HepG2 (cell line): ENCODE measurements at regions of chr2 and their contacts with region 1.

Region 1: GRCh38 chr2:133262888-133263287 is 305.4 kb downstream of the NCKAP5 start:
- DNase-seq: no peak
- ATAC-seq: no peak
- H3K4me3 ChIP-seq: no peak overlapping the region
- H3K27ac ChIP-seq: no peak overlapping the region
- H3K4me1 ChIP-seq: no peaks in the 10 kb centered on the region
- H3K27me3 ChIP-seq: 0 out of 5 replicates have a peak, but pooled peaks cover 0 to 3% of the 10 kb centered on the region in 2 experiments
- CTCF ChIP-seq: no peak
- EP300 ChIP-seq: no peak
- POLR2A ChIP-seq: no peak
- RAD21 ChIP-seq: no peak

Region 2: DNA sequence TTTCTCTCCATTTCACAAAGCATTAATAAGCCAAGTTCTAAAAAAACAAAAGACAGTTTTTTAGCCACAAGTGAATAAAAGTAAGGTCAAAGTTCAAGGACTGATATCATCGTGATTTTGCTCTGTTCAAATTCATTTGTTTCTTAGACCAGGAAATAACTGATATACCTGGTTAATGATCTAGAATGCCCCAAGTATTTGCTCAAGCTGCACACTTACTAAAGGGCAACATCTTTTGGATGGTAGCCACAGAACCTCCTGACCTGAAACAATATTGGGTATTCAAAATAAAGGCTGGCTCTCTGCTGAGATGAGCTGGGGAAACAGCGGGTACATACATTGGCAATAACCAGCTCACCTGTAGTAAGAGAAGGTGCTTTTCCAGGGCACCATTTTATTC is 278.2 kb before region 1 on chr2:
- CTCF ChIA-PET with region 1: no interaction called
- POLR2A ChIA-PET with region 1: no interaction called
- in situ Hi-C with region 1: no loop called
- intact Hi-C with region 1: no loop called
- DNase-seq: no peak
- ATAC-seq: no peak
- H3K4me3 ChIP-seq: no peak overlapping the region
- H3K27ac ChIP-seq: no peak overlapping the region
- H3K4me1 ChIP-seq: no peaks in the 10 kb centered on the region
- H3K27me3 ChIP-seq: no peaks in the 10 kb centered on the region
- CTCF ChIP-seq: no peak
- EP300 ChIP-seq: no peak
- POLR2A ChIP-seq: no peak
- RAD21 ChIP-seq: no peak

Region 3: DNA sequence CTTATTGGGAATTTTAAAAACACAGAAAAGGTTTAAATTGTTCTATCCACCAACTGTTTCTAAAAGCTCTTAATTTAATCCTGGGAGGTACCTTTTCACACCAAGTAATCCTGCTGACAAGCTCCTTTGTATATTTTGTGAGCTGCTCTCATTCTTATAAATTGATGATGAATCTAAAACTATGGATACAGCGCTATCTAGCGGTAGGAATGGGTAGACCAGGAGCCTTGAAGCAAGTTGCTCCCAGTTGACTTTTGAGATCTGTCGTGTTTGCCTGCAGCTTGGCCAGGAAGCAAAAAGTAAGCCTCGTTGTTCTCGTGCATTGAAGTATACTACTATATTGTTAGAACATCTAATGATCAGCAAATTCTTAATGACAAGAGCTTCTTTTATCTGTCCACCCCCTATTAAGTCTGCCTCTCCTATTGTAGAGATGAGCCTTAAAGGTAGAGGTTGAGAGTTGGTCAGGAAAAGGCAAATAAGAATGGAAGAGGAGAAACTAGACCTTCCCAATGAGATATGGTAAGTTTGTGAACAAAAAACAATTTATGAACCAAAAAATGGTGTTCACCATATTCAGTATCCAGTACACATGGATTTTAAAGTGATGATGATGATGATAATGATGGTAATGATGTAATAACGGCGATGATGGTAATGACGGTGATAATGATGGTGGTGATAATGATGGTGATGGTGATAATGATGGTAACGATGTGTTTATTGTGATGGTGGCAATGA is 517.4 kb after region 1 on chr2:
- CTCF ChIA-PET with region 1: no interaction called
- POLR2A ChIA-PET with region 1: no interaction called
- in situ Hi-C with region 1: no loop called
- intact Hi-C with region 1: loop called (anchors 1 kb)
- DNase-seq: peak; percentile 70
- ATAC-seq: peak; percentile 83
- H3K4me3 ChIP-seq: no peak overlapping the region
- H3K27ac ChIP-seq: no peak overlapping the region
- H3K4me1 ChIP-seq: peaks cover 9% of the 10 kb centered on the region
- H3K27me3 ChIP-seq: peaks cover 0 to 5% of the 10 kb centered on the region in 2 experiments; a peak in 2 of 5 replicates
- CTCF ChIP-seq: peak; percentile 84
- EP300 ChIP-seq: no peak
- POLR2A ChIP-seq: no peak
- RAD21 ChIP-seq: peak; percentile 53; the same call in 1 of the 2 replicates